Activated CD4-positive, alpha-beta T cell treated with anti-CD3 and anti-CD28 coated beads for 36 hours (primary cell): ENCODE measurements at regions of chr13 and their contacts with region 1.

Region 1: DNA sequence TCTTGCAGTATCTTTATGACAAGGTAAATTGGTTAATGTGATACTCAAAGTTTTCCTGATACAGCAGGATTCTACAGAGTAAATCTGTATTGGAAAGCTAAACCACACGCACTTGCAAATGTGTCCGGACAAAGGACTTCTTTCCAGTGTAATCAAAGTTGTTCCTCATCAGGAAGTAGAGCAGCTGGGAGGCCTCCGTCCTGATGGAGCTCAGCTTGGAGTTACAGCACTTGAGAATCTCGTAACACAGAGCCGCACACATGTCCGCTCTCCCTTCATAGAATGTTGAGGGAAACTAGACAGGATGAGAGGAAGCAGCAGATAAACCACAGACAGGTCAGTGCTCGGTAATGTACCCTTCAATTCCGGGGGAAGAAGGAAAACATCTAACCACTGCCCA is 78.8 kb upstream of the SLC15A1 start:
- DNase-seq: no peak
- ATAC-seq: no peak
- H3K4me3 Mint-ChIP-seq: no peak overlapping the region
- H3K27ac Mint-ChIP-seq: no peak overlapping the region
- H3K4me1 Mint-ChIP-seq: peaks cover 4% of the 10 kb centered on the region
- H3K27me3 Mint-ChIP-seq: no peaks in the 10 kb centered on the region

Region 2: GRCh38 chr13:98842864-98843481 is 11.7 kb after region 1 on chr13:
- CTCF ChIA-PET with region 1: interaction called, 10 read pairs
- POLR2A ChIA-PET with region 1: interaction called, 3 read pairs
- intact Hi-C with region 1: no loop called
- DNase-seq: peak; percentile 86
- ATAC-seq: peak; percentile 88
- H3K4me3 Mint-ChIP-seq: no peak overlapping the region
- H3K27ac Mint-ChIP-seq: no peak overlapping the region
- H3K4me1 Mint-ChIP-seq: no peaks in the 10 kb centered on the region
- H3K27me3 Mint-ChIP-seq: no peaks in the 10 kb centered on the region